GM12878 (cell line): ENCODE measurements at regions of chr2 and their contacts with region 1.

Region 1: GRCh38 chr2:8408560-8409460 is 273.0 kb upstream of the ID2 start:
- DNase-seq: peak; percentile 99
- ATAC-seq: peak; percentile 90
- H3K4me3 ChIP-seq: no peak overlapping the region
- H3K27ac ChIP-seq: peak overlapping the region; percentile 80
- H3K4me1 ChIP-seq: peaks cover 32% of the 10 kb centered on the region
- H3K27me3 ChIP-seq: no peaks in the 10 kb centered on the region
- CTCF ChIP-seq: no peak
- EP300 ChIP-seq: peak; percentile 95 to 96
- POLR2A ChIP-seq: no peak
- RAD21 ChIP-seq: peak; percentile 29; the same call in 1 of the 2 replicates

Region 2: DNA sequence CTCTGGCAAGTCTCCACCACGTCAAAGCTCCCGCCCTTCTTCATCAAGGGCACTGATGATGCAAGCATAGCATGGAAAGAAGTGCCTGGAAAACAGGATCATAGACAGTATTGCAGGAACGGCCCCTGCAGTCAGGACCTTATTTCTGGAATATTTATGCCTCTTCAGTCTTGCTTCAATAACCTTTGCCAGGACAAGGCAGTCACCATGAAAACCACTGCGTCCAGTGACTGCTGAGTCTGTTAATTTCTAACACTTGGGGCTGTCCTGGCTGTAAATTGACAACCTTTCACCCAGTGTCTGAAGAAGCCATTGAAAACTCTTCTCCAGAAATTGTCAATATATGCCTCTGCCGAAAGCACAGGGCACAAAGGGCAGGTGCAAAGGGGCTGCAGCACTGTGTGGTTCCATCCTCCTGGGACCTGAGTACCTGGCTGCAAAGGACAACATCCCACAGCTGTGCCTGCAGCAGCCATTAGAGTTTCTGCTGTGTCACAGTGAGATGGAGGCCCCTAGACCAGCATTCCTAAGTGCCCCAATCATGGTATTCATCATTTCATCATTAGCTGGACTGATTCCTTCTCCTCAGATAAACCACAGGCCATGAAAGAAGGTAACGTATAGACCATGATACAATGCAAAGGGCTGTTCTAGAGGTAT is 672.0 kb before region 1 on chr2:
- CTCF ChIA-PET with region 1: no interaction called
- POLR2A ChIA-PET with region 1: no interaction called
- RAD21 ChIA-PET with region 1: no interaction called
- SMC1A ChIA-PET with region 1: interaction called, 3 read pairs
- in situ Hi-C with region 1: no loop called
- intact Hi-C with region 1: loop called (anchors 5 kb)
- DNase-seq: no peak
- ATAC-seq: peak; percentile 33
- H3K4me3 ChIP-seq: no peak overlapping the region
- H3K27ac ChIP-seq: no peak overlapping the region
- H3K4me1 ChIP-seq: no peaks in the 10 kb centered on the region
- H3K27me3 ChIP-seq: no peaks in the 10 kb centered on the region
- CTCF ChIP-seq: no peak
- EP300 ChIP-seq: no peak
- POLR2A ChIP-seq: no peak
- RAD21 ChIP-seq: no peak

Region 3: GRCh38 chr2:8234757-8235374 is 173.9 kb before region 1 on chr2:
- CTCF ChIA-PET with region 1: no interaction called
- POLR2A ChIA-PET with region 1: interaction called, 3 read pairs
- RAD21 ChIA-PET with region 1: interaction called, 6 read pairs
- SMC1A ChIA-PET with region 1: interaction called, 12 read pairs
- in situ Hi-C with region 1: no loop called
- intact Hi-C with region 1: loop called (anchors 2 kb)
- DNase-seq: peak; percentile 90
- ATAC-seq: peak; percentile 88
- H3K4me3 ChIP-seq: peak overlapping the region; percentile 26; the same call in 1 of the 2 replicates
- H3K27ac ChIP-seq: peak overlapping the region; percentile 41
- H3K4me1 ChIP-seq: peaks cover 39% of the 10 kb centered on the region
- H3K27me3 ChIP-seq: no peaks in the 10 kb centered on the region
- CTCF ChIP-seq: no peak
- EP300 ChIP-seq: peak; percentile 78 to 84
- POLR2A ChIP-seq: no peak
- RAD21 ChIP-seq: no peak

Region 4: DNA sequence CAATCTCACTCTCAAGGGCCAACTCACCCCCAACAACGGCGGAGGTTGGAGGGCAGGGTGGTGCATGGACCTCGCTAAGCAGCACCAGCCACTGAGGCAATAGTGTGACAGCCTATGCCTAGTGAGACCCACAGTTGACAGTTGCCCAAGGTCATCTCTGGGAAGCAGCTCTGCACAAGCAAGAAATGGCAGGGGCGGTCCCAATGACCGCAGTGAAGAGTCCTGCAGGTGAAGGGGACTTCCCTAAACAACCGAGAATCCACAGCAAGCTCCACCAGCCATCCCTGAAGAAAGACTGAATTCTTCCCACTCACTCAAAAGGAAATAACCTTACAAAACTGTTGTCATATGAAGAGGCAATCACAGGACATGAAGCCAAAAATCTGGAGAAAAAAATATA is 40.3 kb before region 1 on chr2:
- CTCF ChIA-PET with region 1: interaction called, 3 read pairs
- POLR2A ChIA-PET with region 1: no interaction called
- RAD21 ChIA-PET with region 1: interaction called, 9 read pairs
- SMC1A ChIA-PET with region 1: interaction called, 17 read pairs
- in situ Hi-C with region 1: no loop called
- intact Hi-C with region 1: no loop called
- DNase-seq: no peak
- ATAC-seq: peak; percentile 88
- H3K4me3 ChIP-seq: no peak overlapping the region
- H3K27ac ChIP-seq: no peak overlapping the region
- H3K4me1 ChIP-seq: peaks cover 9% of the 10 kb centered on the region
- H3K27me3 ChIP-seq: no peaks in the 10 kb centered on the region
- CTCF ChIP-seq: no peak
- EP300 ChIP-seq: no peak
- POLR2A ChIP-seq: no peak
- RAD21 ChIP-seq: 0 out of 2 replicates have a peak, but pooled peaks have one; percentile 14

Region 5: DNA sequence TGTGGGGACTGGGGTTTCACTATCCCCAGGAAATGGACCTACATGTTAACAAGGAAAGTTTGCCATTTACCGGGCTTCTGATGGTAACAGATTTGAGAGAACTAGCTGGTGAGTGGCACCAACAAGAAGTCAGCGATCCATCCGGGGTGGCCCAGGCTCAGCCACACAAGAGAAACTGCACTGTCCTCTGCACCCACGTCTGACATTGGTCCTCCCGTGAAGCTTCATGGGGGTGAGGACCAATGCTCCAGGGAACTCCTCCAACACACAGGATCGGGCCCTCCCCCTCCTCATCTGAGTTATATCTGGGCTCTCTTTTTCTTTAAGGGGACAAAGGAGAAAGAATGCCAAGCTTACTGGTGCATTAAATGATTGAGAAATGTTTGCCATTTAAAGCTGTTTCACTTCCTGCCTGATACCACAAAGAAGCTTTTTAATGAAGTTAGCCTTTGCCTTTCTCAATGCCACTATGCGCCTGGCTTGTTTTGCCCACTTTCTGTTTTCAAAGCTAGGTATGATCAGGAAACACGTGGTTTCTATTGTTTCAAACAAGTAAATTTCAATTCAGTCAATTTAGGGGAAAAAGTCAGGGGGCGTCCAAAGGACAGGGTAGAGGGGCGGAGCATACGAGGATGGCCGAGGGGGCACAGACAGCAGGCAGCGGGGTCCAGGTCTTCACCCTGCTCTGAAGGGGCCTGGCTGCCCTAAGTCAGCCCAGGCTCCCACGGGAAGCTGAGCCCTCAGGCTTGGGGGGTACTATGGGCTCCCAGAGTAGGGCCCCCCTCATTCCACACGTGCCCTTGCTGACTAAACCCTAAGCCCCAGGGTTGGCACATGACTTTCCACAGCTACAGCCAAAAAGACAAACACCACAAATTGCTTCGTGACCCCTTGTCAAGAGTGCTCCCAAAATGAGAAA is 69.0 kb after region 1 on chr2:
- CTCF ChIA-PET with region 1: interaction called, 3 read pairs
- POLR2A ChIA-PET with region 1: interaction called, 5 read pairs
- RAD21 ChIA-PET with region 1: interaction called, 22 read pairs
- SMC1A ChIA-PET with region 1: interaction called, 145 read pairs
- in situ Hi-C with region 1: no loop called
- intact Hi-C with region 1: loop called (anchors 1 kb)
- DNase-seq: peak; percentile 95
- ATAC-seq: peak; percentile 52
- H3K4me3 ChIP-seq: peak overlapping the region; percentile 43; the same call in 1 of the 2 replicates
- H3K27ac ChIP-seq: peak overlapping the region; percentile 62
- H3K4me1 ChIP-seq: peaks cover 68% of the 10 kb centered on the region
- H3K27me3 ChIP-seq: no peaks in the 10 kb centered on the region
- CTCF ChIP-seq: no peak
- EP300 ChIP-seq: peak; percentile 94 to 96
- POLR2A ChIP-seq: no peak
- RAD21 ChIP-seq: no peak

Region 6: GRCh38 chr2:8544786-8545694 is 136.2 kb after region 1 on chr2:
- CTCF ChIA-PET with region 1: interaction called, 5 read pairs
- POLR2A ChIA-PET with region 1: interaction called, 4 read pairs
- RAD21 ChIA-PET with region 1: interaction called, 25 read pairs
- SMC1A ChIA-PET with region 1: interaction called, 23 read pairs
- in situ Hi-C with region 1: loop called (anchors 5 kb)
- intact Hi-C with region 1: loop called (anchors 1 kb)
- DNase-seq: peak; percentile 62
- ATAC-seq: peak; percentile 71
- H3K4me3 ChIP-seq: no peak overlapping the region
- H3K27ac ChIP-seq: peak overlapping the region; percentile 95
- H3K4me1 ChIP-seq: peaks cover 56% of the 10 kb centered on the region
- H3K27me3 ChIP-seq: no peaks in the 10 kb centered on the region
- CTCF ChIP-seq: peak; percentile 44 to 66 (median 54); a peak in 5 of 6 replicates
- EP300 ChIP-seq: peak; percentile 8 to 64; a peak in 2 of 4 replicates
- POLR2A ChIP-seq: peak; percentile 29
- RAD21 ChIP-seq: peak; percentile 60